BJ (cell line): ENCODE measurements at regions of chr1 and their contacts with region 1.

Region 1: DNA sequence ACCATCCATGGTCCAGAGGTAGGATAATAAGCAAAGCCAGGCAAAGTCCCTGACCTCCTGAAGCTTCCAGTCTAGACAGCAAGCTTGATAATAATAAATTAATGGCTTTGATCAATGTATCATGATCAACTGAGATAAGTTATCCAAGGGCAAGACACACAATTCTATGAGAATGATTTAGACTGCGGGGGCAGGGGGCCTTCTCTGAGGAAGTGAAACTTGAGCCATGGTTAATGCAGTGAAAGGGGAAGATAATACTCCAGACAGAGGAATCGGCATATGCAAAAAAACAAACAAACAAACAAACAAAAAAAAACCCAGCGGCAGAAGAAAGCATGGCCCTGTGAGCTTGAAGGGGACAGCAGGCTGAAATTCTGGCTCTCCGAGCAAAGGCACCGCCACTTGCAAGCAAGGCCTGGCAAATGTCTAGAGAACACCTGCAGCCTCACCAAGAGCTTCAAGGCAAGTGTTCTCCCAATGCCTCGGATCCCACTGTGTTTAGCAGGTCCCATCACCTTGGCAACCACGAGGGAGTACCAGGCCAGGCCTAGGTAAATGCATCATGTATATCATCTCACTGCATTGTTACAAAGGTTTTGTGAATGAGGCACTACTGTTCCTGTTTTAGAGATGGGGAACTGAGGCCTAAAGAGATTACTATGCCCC is 24.9 kb downstream of the CSMD2 start:
- DNase-seq: no peak
- H3K4me3 ChIP-seq: no peak overlapping the region
- H3K27me3 ChIP-seq: no peaks in the 10 kb centered on the region
- CTCF ChIP-seq: no peak

Region 2: GRCh38 chr1:34113887-34114286 is 26.3 kb before region 1 on chr1:
- CTCF ChIA-PET with region 1: interaction called, 4 read pairs
- POLR2A ChIA-PET with region 1: interaction called, 13 read pairs
- DNase-seq: no peak
- H3K4me3 ChIP-seq: no peak overlapping the region
- H3K27me3 ChIP-seq: no peaks in the 10 kb centered on the region
- CTCF ChIP-seq: peak; percentile 52

Region 3: DNA sequence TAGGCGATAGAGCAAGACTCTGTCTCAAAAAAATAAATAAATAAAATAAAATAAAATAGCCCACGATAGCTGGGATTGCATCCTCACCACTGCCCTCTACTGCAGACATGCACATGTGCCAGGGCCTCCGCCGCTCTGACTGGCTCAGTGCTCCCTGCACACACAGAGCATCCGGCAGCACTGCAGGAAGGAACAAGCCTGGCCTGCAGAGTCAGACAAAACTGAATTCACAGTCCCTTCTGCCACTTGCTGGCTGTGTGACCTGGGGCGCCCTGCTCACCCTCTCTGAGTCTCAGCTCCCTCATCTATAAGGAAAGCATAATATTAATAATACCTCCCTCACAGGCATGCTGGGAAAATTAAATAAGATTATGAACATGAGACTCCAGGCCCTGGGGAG is 10.5 kb before region 1 on chr1:
- CTCF ChIA-PET with region 1: no interaction called
- POLR2A ChIA-PET with region 1: no interaction called
- DNase-seq: no peak
- H3K4me3 ChIP-seq: no peak overlapping the region
- H3K27me3 ChIP-seq: no peaks in the 10 kb centered on the region
- CTCF ChIP-seq: no peak